Right ventricle myocardium inferior (tissue), 1 donor: ENCODE measurements at regions of chr20 and their contacts with region 1.

Region 1: GRCh38 chr20:20759132-20759531 is 46.7 kb upstream of the RALGAPA2 start:
- DNase-seq: no peak
- ATAC-seq: no peak

Region 2: GRCh38 chr20:20552076-20552475 is 207.1 kb before region 1 on chr20:
- intact Hi-C with region 1: no loop called
- DNase-seq: no peak
- ATAC-seq: no peak

Region 3: DNA sequence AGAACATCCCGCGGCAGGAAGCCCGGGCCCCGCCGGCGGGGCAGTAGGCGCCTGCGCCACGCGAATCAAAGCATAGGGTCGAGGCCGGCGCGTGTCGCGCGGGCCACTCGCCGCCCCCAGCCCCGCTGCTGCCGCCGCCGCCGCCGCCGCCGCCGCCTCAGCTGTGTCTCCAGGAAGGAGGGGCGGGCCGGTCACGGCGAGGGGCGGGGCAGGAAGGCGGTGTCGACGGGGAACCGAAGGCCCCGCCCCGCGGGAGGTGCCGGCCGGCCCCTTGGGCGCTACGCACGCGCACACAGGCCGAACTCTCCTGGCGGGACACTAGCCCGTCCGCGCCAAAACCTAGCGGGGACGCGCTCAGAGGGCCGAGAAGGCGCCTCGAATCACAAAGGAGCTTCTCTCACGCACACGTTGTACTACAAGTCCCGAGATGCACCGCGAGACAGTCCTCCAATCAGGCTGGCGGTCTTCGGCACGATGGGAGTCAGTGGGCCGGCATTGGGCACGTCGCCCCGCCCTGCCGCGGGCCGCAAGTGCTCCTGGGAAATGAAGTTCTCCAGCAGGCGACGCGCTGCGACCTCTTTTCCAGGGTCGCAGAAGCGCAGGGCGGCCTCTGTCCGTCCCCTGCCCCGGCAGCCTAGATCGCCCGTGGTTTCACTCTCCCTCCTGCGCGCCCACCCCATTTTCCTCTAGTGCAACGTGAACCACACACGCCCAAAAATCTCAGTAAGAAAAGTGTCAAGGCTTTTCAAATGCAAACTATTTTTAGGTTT is 46.5 kb before region 1 on chr20 and contains the start of gene RALGAPA2:
- intact Hi-C with region 1: loop called (anchors 5 kb)
- DNase-seq: peak; percentile 99
- ATAC-seq: peak; percentile 99
- total RNA-seq, gene RALGAPA2: 16.5 TPM

Region 4: GRCh38 chr20:20824924-20825584 is 65.9 kb after region 1 on chr20:
- intact Hi-C with region 1: loop called (anchors 10 kb)
- DNase-seq: peak; percentile 85
- ATAC-seq: peak; percentile 63